ENCODE measurements at regions of chr12 and their contacts with region 1.

Region 1: DNA sequence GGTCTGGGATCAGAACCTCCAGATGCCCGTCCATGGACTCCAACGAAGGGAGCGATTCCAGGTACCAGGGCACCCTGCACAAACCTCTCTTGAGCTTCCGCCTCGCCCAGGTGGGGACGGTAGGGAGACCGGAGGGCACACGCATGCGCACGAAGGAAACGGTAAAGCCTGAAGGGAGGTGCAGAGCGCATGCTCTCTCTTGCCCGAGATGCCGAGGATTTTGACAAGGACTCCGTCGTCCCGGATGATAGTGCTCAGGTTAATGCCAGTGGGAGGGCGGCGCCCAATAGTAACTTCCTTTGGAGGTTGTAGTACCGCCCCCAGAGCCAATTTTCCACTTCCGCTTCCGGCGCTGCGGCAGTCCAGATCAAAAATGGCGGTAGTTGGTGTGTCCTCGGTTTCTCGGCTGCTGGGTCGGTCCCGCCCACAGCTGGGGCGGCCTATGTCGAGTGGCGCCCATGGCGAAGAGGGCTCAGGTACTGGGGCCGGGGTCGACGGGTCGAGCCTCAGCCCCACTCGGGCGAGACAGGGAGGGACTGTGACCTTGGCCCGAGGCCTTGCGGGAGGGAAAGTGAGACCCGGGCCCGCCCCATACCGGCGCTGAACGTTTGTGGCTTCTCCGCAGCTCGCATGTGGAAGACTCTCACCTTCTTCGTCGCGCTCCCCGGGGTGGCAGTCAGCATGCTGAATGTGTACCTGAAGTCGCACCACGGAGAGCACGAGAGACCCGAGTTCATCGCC is at the start of gene COX6A1:
- DNase-seq: peak; percentile 98
- ATAC-seq: peak; percentile 96
- H3K4me3 ChIP-seq: peak within 1 kb of the TSS; percentile 73 to 86 (median 83)
- H3K4me3 Mint-ChIP-seq: peak within 1 kb of the TSS; percentile 91
- H3K27ac ChIP-seq: peak within 1 kb of the TSS; percentile 70 to 84
- H3K27ac Mint-ChIP-seq: peak within 1 kb of the TSS; percentile 96
- H3K4me1 ChIP-seq: peaks cover 18 to 20% of the 10 kb centered on the region in 2 donors
- H3K4me1 Mint-ChIP-seq: peaks cover 26% of the 10 kb centered on the region
- H3K27me3 ChIP-seq: peaks cover 0 to 5% (median 2%) of the 10 kb centered on the region in 4 experiments
- H3K27me3 Mint-ChIP-seq: peaks cover 8% of the 10 kb centered on the region
- CTCF ChIP-seq: peak; percentile 9
- total RNA-seq, gene COX6A1: 132 and 137 TPM in 2 replicates

Region 2: GRCh38 chr12:120301962-120302815 is 135.7 kb before region 1 on chr12 and contains the start of gene SIRT4:
- CTCF ChIA-PET with region 1: no interaction called
- POLR2A ChIA-PET with region 1: interaction called, 5 read pairs
- intact Hi-C with region 1: loop called (anchors 2 kb)
- DNase-seq: peak; percentile 94
- ATAC-seq: peak; percentile 100
- H3K4me3 ChIP-seq: peak within 1 kb of the TSS; percentile 72 to 99 (median 92)
- H3K4me3 Mint-ChIP-seq: peak within 1 kb of the TSS; percentile 96
- H3K27ac ChIP-seq: peak within 1 kb of the TSS; percentile 16 to 34
- H3K27ac Mint-ChIP-seq: peak within 1 kb of the TSS; percentile 88
- H3K4me1 ChIP-seq: peaks cover 0 to 4% of the 10 kb centered on the region in 2 donors
- H3K4me1 Mint-ChIP-seq: peaks cover 7% of the 10 kb centered on the region
- H3K27me3 ChIP-seq: no peaks in the 10 kb centered on the region
- H3K27me3 Mint-ChIP-seq: no peaks in the 10 kb centered on the region
- CTCF ChIP-seq: peak; percentile 76
- total RNA-seq, gene SIRT4: 2.5 and 4.8 TPM in 2 replicates

Region 3: GRCh38 chr12:120495723-120496412 is 57.9 kb after region 1 on chr12 and contains the start of gene DYNLL1:
- CTCF ChIA-PET with region 1: interaction called, 5 read pairs
- POLR2A ChIA-PET with region 1: no interaction called
- intact Hi-C with region 1: loop called (anchors 1 kb)
- DNase-seq: peak; percentile 99
- ATAC-seq: peak; percentile 95
- H3K4me3 ChIP-seq: peak within 1 kb of the TSS; percentile 68 to 90 (median 83)
- H3K4me3 Mint-ChIP-seq: peak within 1 kb of the TSS; percentile 98
- H3K27ac ChIP-seq: peak within 1 kb of the TSS; percentile 45 to 78
- H3K27ac Mint-ChIP-seq: peak within 1 kb of the TSS; percentile 93
- H3K4me1 ChIP-seq: peaks cover 17% of the 10 kb centered on the region in 2 donors
- H3K4me1 Mint-ChIP-seq: peaks cover 28% of the 10 kb centered on the region
- H3K27me3 ChIP-seq: no peaks in the 10 kb centered on the region
- H3K27me3 Mint-ChIP-seq: no peaks in the 10 kb centered on the region
- CTCF ChIP-seq: no peak
- total RNA-seq, gene DYNLL1: 132 and 138 TPM in 2 replicates

Region 4: DNA sequence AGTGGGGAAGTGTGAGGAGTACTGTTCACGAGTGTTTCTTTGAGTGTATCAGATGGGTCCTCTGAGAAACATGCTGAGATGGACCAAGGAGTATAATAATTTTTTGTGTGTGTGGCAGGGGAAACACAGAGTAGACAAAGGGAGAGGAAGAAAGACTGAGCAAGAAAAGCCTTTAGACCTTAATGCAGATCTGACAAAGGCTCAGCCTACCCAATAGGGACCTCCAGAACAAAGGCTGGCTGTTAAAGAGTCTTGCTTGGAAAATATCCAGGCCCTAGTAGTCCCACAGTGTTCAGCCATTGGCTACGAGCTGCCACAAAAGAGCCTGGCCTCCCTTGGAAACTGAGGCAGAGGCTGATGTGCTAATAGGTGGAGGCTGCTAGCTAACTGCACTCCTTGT is 77.6 kb after region 1 on chr12:
- CTCF ChIA-PET with region 1: no interaction called
- POLR2A ChIA-PET with region 1: no interaction called
- intact Hi-C with region 1: no loop called
- DNase-seq: no peak
- ATAC-seq: no peak
- H3K4me3 ChIP-seq: no peak overlapping the region
- H3K4me3 Mint-ChIP-seq: no peak overlapping the region
- H3K27ac ChIP-seq: no peak overlapping the region
- H3K27ac Mint-ChIP-seq: no peak overlapping the region
- H3K4me1 ChIP-seq: no peaks in the 10 kb centered on the region
- H3K4me1 Mint-ChIP-seq: no peaks in the 10 kb centered on the region
- H3K27me3 ChIP-seq: no peaks in the 10 kb centered on the region
- H3K27me3 Mint-ChIP-seq: no peaks in the 10 kb centered on the region
- CTCF ChIP-seq: no peak

Region 5: GRCh38 chr12:120904197-120904773 is 466.4 kb after region 1 on chr12 and contains the start of gene SPPL3:
- CTCF ChIA-PET with region 1: no interaction called
- POLR2A ChIA-PET with region 1: interaction called, 7 read pairs
- intact Hi-C with region 1: loop called (anchors 2 kb)
- DNase-seq: peak; percentile 94
- ATAC-seq: peak; percentile 83
- H3K4me3 ChIP-seq: peak within 1 kb of the TSS; percentile 32 to 85 (median 75)
- H3K4me3 Mint-ChIP-seq: peak within 1 kb of the TSS; percentile 97
- H3K27ac ChIP-seq: peak within 1 kb of the TSS; percentile 54 to 80
- H3K27ac Mint-ChIP-seq: peak within 1 kb of the TSS; percentile 95
- H3K4me1 ChIP-seq: peaks cover 19 to 24% of the 10 kb centered on the region in 2 donors
- H3K4me1 Mint-ChIP-seq: peaks cover 29% of the 10 kb centered on the region
- H3K27me3 ChIP-seq: no peaks in the 10 kb centered on the region
- H3K27me3 Mint-ChIP-seq: no peaks in the 10 kb centered on the region
- CTCF ChIP-seq: no peak
- total RNA-seq, gene SPPL3: 43.6 and 53.7 TPM in 2 replicates

Region 6: DNA sequence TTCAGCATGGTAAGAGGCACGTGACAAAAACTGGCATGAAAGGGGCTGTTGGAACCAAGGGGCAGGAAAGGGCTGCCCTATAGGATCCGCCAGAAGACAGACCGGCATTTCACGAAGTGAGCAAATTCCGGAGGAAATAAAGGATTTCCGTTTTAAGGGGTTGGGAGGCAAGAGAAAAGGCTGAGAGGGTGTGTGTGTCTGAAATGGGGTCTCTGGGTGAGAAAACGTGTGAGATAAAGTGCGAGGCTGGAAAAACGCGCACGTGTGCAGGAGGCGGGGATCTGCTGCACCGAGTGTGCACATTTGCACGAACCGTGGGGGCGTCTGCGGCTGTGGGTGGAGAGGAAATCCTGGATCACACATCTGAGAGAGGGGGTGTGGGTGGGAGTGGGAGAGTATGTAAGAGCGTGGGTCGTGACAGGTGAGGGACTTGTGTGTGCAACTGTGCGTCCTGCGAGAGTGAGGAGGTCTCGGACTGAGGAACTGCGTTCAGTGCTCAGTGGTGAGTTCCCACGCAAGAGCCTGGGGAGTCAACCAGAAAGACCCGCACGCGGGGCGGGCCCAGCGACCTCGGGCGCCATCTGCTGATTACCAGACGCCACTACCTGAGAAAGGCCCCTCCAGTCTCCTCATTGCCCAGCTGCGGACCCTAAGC is 657.7 kb after region 1 on chr12:
- CTCF ChIA-PET with region 1: interaction called, 3 read pairs
- POLR2A ChIA-PET with region 1: no interaction called
- intact Hi-C with region 1: loop called (anchors 10 kb)
- DNase-seq: peak; percentile 86
- ATAC-seq: peak; percentile 97
- H3K4me3 ChIP-seq: peak overlapping the region in 4 of 5 experiments; percentile 31 to 59 (median 48)
- H3K4me3 Mint-ChIP-seq: peak overlapping the region; percentile 87
- H3K27ac ChIP-seq: no peak overlapping the region
- H3K27ac Mint-ChIP-seq: peak overlapping the region; percentile 5
- H3K4me1 ChIP-seq: peaks cover 15 to 20% of the 10 kb centered on the region in 2 donors
- H3K4me1 Mint-ChIP-seq: peaks cover 26% of the 10 kb centered on the region
- H3K27me3 ChIP-seq: peaks cover 0 to 5% (median 0%) of the 10 kb centered on the region in 4 experiments
- H3K27me3 Mint-ChIP-seq: peaks cover 13% of the 10 kb centered on the region
- CTCF ChIP-seq: peak; percentile 92

Measured in B cell (primary cell).